ENCODE measurements at regions of chrX and their contacts with region 1.

Region 1: GRCh38 chrX:70096052-70096451 is 33.8 kb downstream of the OTUD6A start:
- DNase-seq: no peak
- H3K4me3 ChIP-seq: no peak overlapping the region
- H3K27ac ChIP-seq: no peak overlapping the region
- H3K4me1 ChIP-seq: no peaks in the 10 kb centered on the region
- H3K27me3 ChIP-seq: no peaks in the 10 kb centered on the region
- CTCF ChIP-seq: no peak
- EP300 ChIP-seq: no peak
- POLR2A ChIP-seq: no peak

Region 2: DNA sequence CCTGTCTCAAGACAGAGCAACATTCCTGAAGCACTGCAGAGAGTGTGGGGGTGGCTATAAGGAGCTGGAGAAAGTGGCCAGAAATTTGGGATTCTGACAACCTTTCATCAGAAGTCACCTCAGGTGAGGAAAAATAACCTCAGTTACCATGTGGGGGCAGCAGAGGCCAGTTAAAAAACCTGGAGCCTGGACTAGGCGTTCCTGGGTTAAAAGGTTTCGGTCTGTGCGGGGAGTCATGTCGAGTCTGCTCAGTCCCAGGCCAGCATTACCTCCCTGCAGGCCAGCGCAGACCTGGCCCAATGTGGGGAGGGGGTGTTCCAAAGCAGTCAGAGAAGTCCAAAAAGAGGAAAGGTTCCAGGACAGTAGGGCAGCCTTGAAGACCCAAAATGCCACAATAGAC is 602.9 kb before region 1 on chrX:
- intact Hi-C with region 1: loop called (anchors 5 kb)
- DNase-seq: no peak
- H3K4me3 ChIP-seq: no peak overlapping the region
- H3K27ac ChIP-seq: no peak overlapping the region
- H3K4me1 ChIP-seq: no peaks in the 10 kb centered on the region
- H3K27me3 ChIP-seq: no peaks in the 10 kb centered on the region
- CTCF ChIP-seq: peak; percentile 25 to 50 (median 40)
- EP300 ChIP-seq: no peak
- POLR2A ChIP-seq: no peak

Region 3: DNA sequence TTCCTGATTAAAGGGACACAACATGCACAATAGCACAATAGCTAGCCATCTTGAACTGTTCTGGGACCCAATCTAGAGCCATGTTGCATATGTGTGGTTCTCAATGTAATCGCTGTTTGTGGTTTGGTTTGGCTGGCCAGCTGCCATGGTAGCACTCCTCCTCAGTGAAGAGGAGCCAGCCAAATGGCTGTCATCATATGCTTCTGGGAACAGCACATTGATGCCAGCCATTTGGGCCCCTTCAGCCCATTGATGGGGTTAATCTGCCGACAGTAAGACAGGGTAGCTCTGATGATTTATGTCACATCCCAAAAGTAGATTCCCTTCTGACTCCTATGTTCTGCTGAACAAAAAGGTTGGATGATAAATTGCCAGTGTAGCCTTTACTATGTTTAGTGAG is 94.8 kb before region 1 on chrX:
- intact Hi-C with region 1: no loop called
- DNase-seq: no peak
- H3K4me3 ChIP-seq: no peak overlapping the region
- H3K27ac ChIP-seq: peak overlapping the region in 1 of 4 donors; percentile 10
- H3K4me1 ChIP-seq: peaks cover 0 to 23% (median 7%) of the 10 kb centered on the region in 4 donors
- H3K27me3 ChIP-seq: no peaks in the 10 kb centered on the region
- CTCF ChIP-seq: no peak
- EP300 ChIP-seq: no peak
- POLR2A ChIP-seq: no peak

Region 4: DNA sequence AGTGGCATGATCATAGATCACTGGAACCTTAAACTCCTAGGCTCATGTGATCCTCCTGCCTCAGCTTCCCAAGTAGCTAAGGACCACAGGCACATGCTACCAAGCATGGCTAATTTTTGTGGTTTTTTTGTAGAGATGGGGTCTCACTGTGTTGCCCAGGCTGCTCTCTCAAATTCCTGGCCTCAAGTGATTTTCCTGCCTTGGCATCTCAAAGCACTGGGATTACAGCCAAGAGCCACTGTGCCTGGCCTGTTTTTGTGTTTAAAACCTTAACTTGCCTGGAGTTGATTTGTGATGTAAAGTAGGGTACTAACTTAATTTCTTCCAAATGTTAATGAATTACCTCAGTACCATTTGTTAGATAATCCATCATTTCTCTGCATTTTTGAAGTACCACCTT is 370.9 kb after region 1 on chrX:
- intact Hi-C with region 1: no loop called
- DNase-seq: no peak
- H3K4me3 ChIP-seq: no peak overlapping the region
- H3K27ac ChIP-seq: no peak overlapping the region
- H3K4me1 ChIP-seq: peaks cover 0 to 6% (median 0%) of the 10 kb centered on the region in 4 donors
- H3K27me3 ChIP-seq: no peaks in the 10 kb centered on the region
- CTCF ChIP-seq: no peak
- EP300 ChIP-seq: no peak
- POLR2A ChIP-seq: no peak

Measured in esophagus muscularis mucosa (tissue), 4 donors.